ENCODE measurements at regions of chr11 and their contacts with region 1.

Region 1: DNA sequence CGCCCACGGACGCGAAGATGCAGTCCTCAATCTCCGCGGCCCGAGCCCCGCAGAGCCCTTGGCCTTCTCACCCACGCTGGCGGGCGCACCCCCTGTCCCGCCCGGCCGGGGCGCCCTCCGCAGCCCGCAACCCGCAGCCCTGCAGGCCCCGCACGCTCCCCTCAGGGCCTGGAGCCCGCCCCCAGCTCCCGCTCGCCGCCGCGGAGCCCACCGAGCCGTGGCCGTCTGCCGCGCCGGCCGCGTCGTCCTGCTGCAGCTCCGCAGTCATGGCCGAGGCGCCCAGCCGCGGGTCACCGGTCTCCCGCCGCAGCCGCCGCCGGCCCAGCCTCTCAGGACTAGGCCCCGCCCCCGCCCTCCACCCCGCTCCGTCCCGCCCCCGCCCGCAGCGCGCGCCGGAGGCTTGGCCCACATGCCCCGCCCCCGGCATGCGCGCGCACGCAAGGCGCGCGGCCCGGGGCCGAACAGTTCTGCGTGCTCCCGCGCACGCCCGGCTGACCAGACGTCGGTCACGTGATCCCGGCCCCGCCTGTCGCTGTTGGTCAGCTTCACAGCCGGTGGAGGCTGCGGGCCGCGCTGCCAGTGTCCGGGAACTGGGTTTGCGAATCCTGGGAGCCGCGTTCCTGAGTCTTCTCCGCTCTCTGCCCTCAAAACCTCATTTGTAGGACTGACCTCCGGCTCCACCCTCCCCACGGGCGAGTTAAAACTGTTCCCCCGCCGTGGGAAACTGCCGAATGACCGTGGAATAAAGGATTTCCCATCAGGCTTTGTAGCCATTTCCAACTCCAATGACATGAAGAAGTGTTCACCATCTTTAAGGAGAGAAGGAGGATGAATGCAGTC is at the start of gene USP28:
- DNase-seq: peak; percentile 95 to 97 (median 96)
- H3K4me3 ChIP-seq: peak within 1 kb of the TSS; percentile 72 to 90 (median 74)
- H3K4me3 Mint-ChIP-seq: peak within 1 kb of the TSS; percentile 92 to 96
- H3K27ac ChIP-seq: peak within 1 kb of the TSS; percentile 92 to 96
- H3K27ac Mint-ChIP-seq: peak within 1 kb of the TSS; percentile 93 to 99 (median 97)
- H3K4me1 ChIP-seq: peaks cover 14 to 31% of the 10 kb centered on the region in 2 donors
- H3K4me1 Mint-ChIP-seq: peaks cover 31% of the 10 kb centered on the region
- H3K27me3 ChIP-seq: no peaks in the 10 kb centered on the region
- H3K27me3 Mint-ChIP-seq: peaks cover 0 to 4% (median 1%) of the 10 kb centered on the region in 3 donors
- CTCF ChIP-seq: no peak
- polyA plus RNA-seq, gene USP28: 13.4 to 21.9 (median 17.7) TPM

Region 2: DNA sequence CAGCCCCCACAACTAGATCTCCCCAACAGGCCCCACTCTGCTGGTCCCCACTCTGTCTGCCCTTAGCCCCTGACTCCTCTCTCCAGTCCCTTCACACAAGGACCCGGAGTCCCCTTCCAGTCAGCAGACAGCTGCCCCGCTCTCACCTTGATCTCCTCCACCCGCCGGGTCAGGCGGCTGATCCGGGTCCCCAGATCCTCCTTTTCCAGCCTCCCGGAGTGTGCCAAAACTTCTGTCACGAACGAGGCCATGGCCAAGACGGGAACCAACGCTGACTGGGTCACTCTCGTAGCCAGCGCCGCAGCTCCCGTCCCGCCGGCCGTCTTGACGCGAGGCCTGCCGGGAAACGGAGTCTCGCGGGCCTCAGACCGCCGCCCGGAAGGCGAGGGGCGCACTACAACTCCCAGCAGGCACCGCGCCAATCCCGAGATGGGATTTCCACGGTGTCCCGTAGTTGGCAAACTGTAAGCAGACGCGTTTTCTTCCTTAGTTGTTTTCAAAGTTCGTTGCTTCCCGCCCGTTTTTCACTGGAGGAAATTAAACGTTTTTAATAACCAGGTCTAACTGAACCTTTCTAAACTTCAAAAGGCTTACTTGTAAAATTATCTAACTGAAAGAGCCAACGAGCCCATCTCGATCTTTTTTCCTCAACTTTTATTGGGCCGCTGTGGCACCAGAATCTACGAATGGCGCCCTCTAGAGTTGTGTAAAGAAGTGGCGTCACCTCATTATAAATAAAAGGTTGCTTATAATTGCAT is 101.9 kb before region 1 on chr11 and contains the start of gene ZW10:
- intact Hi-C with region 1: loop called in 1 of 2 experiments (anchors 10 kb)
- DNase-seq: peak; percentile 92 to 95 (median 93)
- H3K4me3 ChIP-seq: peak within 1 kb of the TSS; percentile 60 to 99 (median 67)
- H3K4me3 Mint-ChIP-seq: peak within 1 kb of the TSS; percentile 98 to 99
- H3K27ac ChIP-seq: peak within 1 kb of the TSS; percentile 21 to 95
- H3K27ac Mint-ChIP-seq: peak within 1 kb of the TSS; percentile 92 to 97 (median 96)
- H3K4me1 ChIP-seq: peaks cover 11 to 14% of the 10 kb centered on the region in 2 donors
- H3K4me1 Mint-ChIP-seq: peaks cover 16% of the 10 kb centered on the region
- H3K27me3 ChIP-seq: no peaks in the 10 kb centered on the region
- H3K27me3 Mint-ChIP-seq: peaks cover 3 to 6% (median 5%) of the 10 kb centered on the region in 3 donors
- CTCF ChIP-seq: peak; percentile 97
- polyA plus RNA-seq, gene ZW10: 3.3 to 13.1 (median 10.2) TPM

Region 3: DNA sequence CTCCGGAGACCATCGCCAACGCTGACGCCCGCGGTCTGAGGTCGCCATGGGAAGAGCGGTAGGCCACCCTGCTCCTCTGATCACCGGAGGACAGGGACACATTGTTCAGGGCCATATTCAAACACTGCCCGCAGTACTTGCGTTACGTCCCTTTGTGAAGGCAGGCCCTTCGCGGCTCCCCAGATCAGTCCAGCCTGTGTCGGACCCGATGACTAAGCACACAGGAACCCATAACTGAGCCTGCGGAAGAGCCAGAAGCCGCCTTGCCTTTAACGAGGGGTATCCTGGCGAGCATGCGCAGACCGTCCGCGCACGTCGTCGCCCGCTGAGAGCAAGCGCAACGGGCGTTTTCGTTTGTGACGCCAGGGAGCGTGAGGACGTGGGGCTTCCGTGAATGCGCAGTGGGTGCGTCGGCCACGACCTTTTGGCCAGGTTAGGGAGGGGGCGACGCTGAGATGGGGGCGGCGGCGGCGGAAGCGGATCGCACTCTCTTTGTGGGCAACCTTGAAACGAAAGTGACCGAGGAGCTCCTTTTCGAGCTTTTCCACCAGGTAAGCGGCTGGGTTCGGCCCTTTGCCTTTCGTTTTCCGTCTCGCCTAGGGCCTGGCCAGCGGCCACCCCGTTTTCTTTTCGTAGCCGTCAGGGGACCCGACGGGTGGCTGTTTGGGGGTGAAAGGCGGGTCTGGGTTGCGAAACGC is 524.9 kb after region 1 on chr11 and contains the starts of genes C11orf71 and RBM7:
- intact Hi-C with region 1: loop called in 1 of 2 experiments (anchors 10 kb)
- DNase-seq: peak; percentile 99
- H3K4me3 ChIP-seq: peak within 1 kb of the TSS; percentile 77 to 90 (median 85)
- H3K4me3 Mint-ChIP-seq: peak within 1 kb of the TSS; percentile 91 to 96
- H3K27ac ChIP-seq: peak within 1 kb of the TSS; percentile 99
- H3K27ac Mint-ChIP-seq: peak within 1 kb of the TSS; percentile 99 to 100 (median 100)
- H3K4me1 ChIP-seq: peaks cover 26 to 45% of the 10 kb centered on the region in 2 donors
- H3K4me1 Mint-ChIP-seq: peaks cover 42% of the 10 kb centered on the region
- H3K27me3 ChIP-seq: no peaks in the 10 kb centered on the region
- H3K27me3 Mint-ChIP-seq: no peaks in the 10 kb centered on the region
- CTCF ChIP-seq: no peak
- polyA plus RNA-seq, gene C11orf71: 9.3 to 23.0 (median 14.2) TPM
- polyA plus RNA-seq, gene RBM7: 27.3 to 36.3 (median 32.4) TPM